CD8-positive, alpha-beta T cell (primary cell): ENCODE measurements at regions of chr14 and their contacts with region 1.

Region 1: DNA sequence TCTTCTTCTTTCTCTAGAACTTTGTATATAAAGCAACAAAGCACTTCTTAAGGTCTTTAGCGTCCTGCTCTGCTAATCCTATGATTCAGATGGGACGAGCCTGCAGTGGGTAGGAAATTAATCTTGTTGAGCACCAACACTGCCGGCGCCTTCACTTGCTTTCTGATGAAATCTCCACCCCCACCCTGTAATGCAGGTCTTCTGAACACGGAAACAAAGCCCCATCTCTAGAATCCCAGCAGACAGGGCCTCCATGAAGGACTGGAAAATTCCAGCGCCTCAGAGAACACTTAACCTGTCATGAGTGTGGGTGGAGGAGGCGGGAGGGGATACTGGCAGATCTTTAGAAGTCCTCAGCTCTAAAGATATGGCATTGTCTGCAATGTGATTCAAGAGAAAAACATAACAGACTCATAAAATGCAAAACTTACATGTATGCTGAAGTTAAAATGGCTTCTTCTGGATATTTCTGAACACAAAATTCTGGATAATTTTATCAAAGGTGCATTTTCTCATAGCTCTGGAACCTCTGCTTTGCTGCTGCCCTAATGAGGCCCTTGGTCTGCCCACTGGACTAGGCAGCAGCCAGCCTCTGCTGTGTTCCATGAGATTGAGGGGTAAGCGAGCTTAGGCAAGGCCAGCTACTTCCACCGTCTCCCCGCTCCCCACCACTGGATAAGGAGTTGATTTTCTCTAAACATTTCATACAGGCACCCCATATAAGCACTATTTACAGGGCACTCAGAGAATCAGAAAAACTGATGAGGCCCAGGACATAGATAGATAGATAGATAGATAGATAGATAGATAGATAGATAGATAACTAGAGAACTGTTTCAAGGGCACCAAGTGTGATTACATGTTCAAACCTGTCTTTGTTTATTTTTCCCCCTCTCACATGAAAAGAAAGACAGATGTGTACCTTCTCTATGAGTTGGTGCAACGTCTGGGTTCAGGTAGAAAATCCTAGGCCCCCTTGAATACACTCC is 43.1 kb downstream of the ZFP36L1 start:
- DNase-seq: no peak
- ATAC-seq: no peak
- H3K4me3 ChIP-seq: no peak overlapping the region
- H3K4me3 Mint-ChIP-seq: no peak overlapping the region
- H3K27ac ChIP-seq: no peak overlapping the region
- H3K27ac Mint-ChIP-seq: no peak overlapping the region
- H3K4me1 ChIP-seq: no peaks in the 10 kb centered on the region
- H3K4me1 Mint-ChIP-seq: peaks cover 5% of the 10 kb centered on the region
- H3K27me3 ChIP-seq: no peaks in the 10 kb centered on the region
- H3K27me3 Mint-ChIP-seq: peaks cover 2% of the 10 kb centered on the region
- CTCF ChIP-seq: no peak

Region 2: GRCh38 chr14:68703093-68703492 is 46.7 kb before region 1 on chr14:
- CTCF ChIA-PET with region 1: no interaction called
- POLR2A ChIA-PET with region 1: no interaction called
- intact Hi-C with region 1: loop called in 1 of 2 experiments (anchors 5 kb)
- DNase-seq: peak in 2 of 9 experiments; percentile 32 to 33
- ATAC-seq: no peak
- H3K4me3 ChIP-seq: no peak overlapping the region
- H3K4me3 Mint-ChIP-seq: no peak overlapping the region
- H3K27ac ChIP-seq: no peak overlapping the region
- H3K27ac Mint-ChIP-seq: no peak overlapping the region
- H3K4me1 ChIP-seq: no peaks in the 10 kb centered on the region
- H3K4me1 Mint-ChIP-seq: no peaks in the 10 kb centered on the region
- H3K27me3 ChIP-seq: no peaks in the 10 kb centered on the region
- H3K27me3 Mint-ChIP-seq: no peaks in the 10 kb centered on the region
- CTCF ChIP-seq: no peak